Naive thymus-derived CD8-positive, alpha-beta T cell (primary cell): ENCODE measurements at regions of chr15 and their contacts with region 1.

Region 1: DNA sequence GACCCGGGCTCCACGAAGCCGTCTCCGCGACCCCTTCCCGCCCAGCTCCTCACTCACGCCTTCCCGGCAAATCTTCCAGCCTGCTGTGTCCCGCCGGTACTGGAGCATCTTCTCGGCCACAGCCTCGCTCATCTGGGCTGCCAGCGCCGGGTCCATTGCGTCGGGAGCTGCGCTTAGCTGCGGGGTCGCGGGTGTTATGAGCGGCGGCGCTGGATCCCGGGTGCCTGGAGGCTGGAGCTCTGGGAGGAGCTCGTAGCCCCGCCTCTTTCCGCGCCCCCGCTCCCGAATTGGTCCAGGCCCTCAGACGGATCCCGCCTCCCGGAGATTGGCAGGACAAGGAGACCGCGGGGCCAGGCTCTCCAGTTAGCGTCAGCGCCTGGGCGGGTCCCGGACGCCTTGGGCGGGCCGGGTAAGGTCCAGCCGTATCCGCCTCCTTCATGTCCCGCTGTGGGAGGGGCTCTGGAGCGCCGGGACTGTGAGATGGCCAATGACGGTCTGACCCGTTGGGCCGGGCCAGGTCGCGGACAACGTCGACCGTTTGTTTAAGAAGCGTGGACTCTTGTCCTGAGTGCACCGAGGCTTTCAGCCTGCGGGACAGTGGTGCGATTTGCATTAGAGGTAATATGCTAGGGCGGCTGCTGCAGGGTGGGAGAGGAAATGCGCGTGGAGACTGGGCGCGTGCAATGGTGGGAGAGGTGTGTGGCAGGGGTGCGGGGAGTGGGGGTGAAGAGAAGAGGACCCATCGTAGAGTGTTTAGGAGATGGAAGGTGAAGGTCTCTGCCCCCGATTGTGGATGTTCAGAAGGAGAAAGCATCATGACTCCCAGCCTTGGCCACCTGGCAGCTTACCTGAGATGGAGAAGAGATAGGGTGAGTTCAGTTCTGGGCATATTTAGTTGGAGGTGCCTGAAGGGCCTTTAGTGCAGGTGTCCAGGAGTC is at the start of gene STARD5:
- DNase-seq: peak; percentile 90 to 97 (median 93)
- ATAC-seq: peak; percentile 97 to 98
- H3K4me3 Mint-ChIP-seq: peak within 1 kb of the TSS; percentile 89 to 99 (median 96)
- H3K27ac Mint-ChIP-seq: peak within 1 kb of the TSS; percentile 77 to 98 (median 95)
- H3K4me1 Mint-ChIP-seq: peaks cover 25 to 55% (median 45%) of the 10 kb centered on the region in 4 donors
- H3K27me3 Mint-ChIP-seq: no peaks in the 10 kb centered on the region
- polyA plus RNA-seq, gene STARD5: 3.8 to 6.9 (median 4.5) TPM

Region 2: GRCh38 chr15:81256916-81257315 is 67.3 kb before region 1 on chr15:
- POLR2A ChIA-PET with region 1: no interaction called
- DNase-seq: no peak
- ATAC-seq: no peak
- H3K4me3 Mint-ChIP-seq: no peak overlapping the region
- H3K27ac Mint-ChIP-seq: no peak overlapping the region
- H3K4me1 Mint-ChIP-seq: no peaks in the 10 kb centered on the region
- H3K27me3 Mint-ChIP-seq: peaks cover 0 to 19% (median 4%) of the 10 kb centered on the region in 5 donors

Region 3: GRCh38 chr15:81296673-81297072 is 27.5 kb before region 1 on chr15:
- POLR2A ChIA-PET with region 1: interaction called, 115 read pairs
- DNase-seq: peak; percentile 39 to 88 (median 74)
- ATAC-seq: peak; percentile 58 to 60
- H3K4me3 Mint-ChIP-seq: peak overlapping the region; percentile 96 to 100 (median 100)
- H3K27ac Mint-ChIP-seq: peak overlapping the region; percentile 92 to 100 (median 98)
- H3K4me1 Mint-ChIP-seq: peaks cover 47 to 83% (median 64%) of the 10 kb centered on the region in 4 donors
- H3K27me3 Mint-ChIP-seq: no peaks in the 10 kb centered on the region

Region 4: DNA sequence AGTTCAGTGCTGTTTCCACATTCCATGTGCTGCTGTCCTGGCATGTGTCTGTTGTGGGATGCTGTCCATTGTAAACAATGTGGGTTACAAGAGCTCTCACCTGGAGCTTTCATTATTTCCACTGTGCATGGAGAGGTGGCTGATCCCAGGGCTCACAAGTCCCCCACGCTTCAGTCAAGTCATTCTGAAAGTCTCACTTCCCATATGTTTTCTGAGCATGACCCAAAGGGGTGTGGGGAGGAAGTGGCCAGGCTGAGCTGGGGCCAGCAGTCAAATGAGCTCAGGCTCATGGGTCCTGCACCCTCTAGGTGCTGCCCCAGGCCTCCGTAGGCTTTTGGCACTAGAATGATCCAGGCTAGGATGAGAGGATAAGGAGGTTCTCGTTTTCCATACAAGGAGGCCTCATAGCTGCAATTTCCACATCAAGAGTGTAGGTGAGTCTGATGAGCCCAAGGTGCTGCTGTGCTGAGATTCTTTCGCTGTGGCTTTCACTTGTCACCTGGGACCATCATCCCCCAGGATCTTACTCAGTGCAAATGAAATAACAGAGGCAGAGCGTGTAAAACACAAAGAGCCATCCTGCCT is 22.3 kb before region 1 on chr15:
- POLR2A ChIA-PET with region 1: interaction called, 123 read pairs
- DNase-seq: no peak
- ATAC-seq: no peak
- H3K4me3 Mint-ChIP-seq: peak overlapping the region; percentile 96 to 100 (median 100)
- H3K27ac Mint-ChIP-seq: peak overlapping the region; percentile 92 to 100 (median 97)
- H3K4me1 Mint-ChIP-seq: peaks cover 39 to 82% (median 64%) of the 10 kb centered on the region in 4 donors
- H3K27me3 Mint-ChIP-seq: no peaks in the 10 kb centered on the region